ENCODE measurements at regions of chr13 and their contacts with region 1.

Region 1: DNA sequence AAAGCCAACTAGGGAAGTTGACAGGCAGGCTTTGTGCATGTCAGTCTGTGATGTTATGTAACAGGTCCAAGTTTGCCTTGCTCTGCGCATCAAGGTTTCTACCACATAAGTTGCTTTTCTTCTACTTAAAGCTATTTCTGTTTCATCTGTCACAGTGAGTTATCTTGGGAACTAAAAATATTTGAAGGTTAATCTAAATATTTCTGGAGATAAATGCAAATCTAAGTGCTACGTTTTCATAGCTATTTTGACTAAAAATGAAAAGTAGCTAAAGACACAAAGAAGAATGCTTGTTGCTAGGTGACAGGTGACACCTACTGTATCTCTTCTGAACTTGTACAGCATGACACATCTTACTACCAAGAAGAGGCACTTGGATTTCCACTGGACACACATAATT is 135.6 kb downstream of the KLF12 start:
- DNase-seq: peak in 2 of 14 experiments; percentile 30 to 37
- ATAC-seq: peak; percentile 77
- H3K4me3 ChIP-seq: no peak overlapping the region
- H3K4me3 Mint-ChIP-seq: peak overlapping the region; percentile 46
- H3K27ac ChIP-seq: no peak overlapping the region
- H3K27ac Mint-ChIP-seq: peak overlapping the region; percentile 78
- H3K4me1 ChIP-seq: peaks cover 4% of the 10 kb centered on the region
- H3K4me1 Mint-ChIP-seq: peaks cover 88% of the 10 kb centered on the region
- H3K27me3 ChIP-seq: no peaks in the 10 kb centered on the region
- H3K27me3 Mint-ChIP-seq: no peaks in the 10 kb centered on the region
- CTCF ChIP-seq: no peak

Region 2: DNA sequence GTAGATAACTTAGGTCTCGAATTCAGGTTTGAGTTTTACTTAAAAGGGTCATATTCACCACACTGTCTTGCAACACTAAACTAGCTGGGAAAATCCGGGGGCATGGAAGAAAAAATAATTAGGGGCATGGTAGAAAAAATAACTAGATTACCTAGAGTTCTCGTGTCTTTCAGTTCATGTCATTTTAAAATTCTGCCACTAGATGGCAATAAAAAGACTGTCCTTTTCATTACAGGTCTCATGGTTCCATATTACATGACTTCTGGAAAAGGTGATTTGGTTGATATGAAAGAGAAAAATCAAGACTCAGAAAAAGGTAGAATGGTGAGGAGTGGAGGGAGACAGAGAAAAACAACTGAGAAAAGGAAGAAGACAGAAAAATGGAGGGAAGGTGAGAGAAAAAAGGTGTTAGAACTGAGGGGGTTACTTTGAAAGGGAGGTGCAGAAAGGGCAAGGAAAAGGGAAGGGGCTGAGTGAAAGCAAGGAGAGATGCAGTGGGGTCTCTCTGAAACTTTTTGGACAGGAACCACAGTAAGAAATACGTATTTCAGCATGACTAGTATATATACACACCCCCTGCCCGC is 163.4 kb before region 1 on chr13:
- CTCF ChIA-PET with region 1: no interaction called
- POLR2A ChIA-PET with region 1: no interaction called
- intact Hi-C with region 1: loop called in 1 of 2 experiments (anchors 5 kb)
- DNase-seq: peak in 3 of 14 experiments; percentile 65 to 69 (median 68)
- ATAC-seq: peak; percentile 73
- H3K4me3 ChIP-seq: no peak overlapping the region
- H3K4me3 Mint-ChIP-seq: no peak overlapping the region
- H3K27ac ChIP-seq: no peak overlapping the region
- H3K27ac Mint-ChIP-seq: no peak overlapping the region
- H3K4me1 ChIP-seq: peaks cover 7% of the 10 kb centered on the region
- H3K4me1 Mint-ChIP-seq: peaks cover 59% of the 10 kb centered on the region
- H3K27me3 ChIP-seq: no peaks in the 10 kb centered on the region
- H3K27me3 Mint-ChIP-seq: no peaks in the 10 kb centered on the region
- CTCF ChIP-seq: peak; percentile 81

Region 3: GRCh38 chr13:73943137-73943964 is 55.3 kb before region 1 on chr13:
- CTCF ChIA-PET with region 1: no interaction called
- POLR2A ChIA-PET with region 1: interaction called, 3 read pairs
- intact Hi-C with region 1: loop called in 1 of 2 experiments (anchors 5 kb)
- DNase-seq: peak in 3 of 14 experiments; percentile 56 to 83 (median 60)
- ATAC-seq: peak; percentile 92
- H3K4me3 ChIP-seq: no peak overlapping the region
- H3K4me3 Mint-ChIP-seq: peak overlapping the region; percentile 47
- H3K27ac ChIP-seq: peak overlapping the region; percentile 57 to 82
- H3K27ac Mint-ChIP-seq: peak overlapping the region; percentile 87
- H3K4me1 ChIP-seq: peaks cover 34% of the 10 kb centered on the region
- H3K4me1 Mint-ChIP-seq: peaks cover 89% of the 10 kb centered on the region
- H3K27me3 ChIP-seq: no peaks in the 10 kb centered on the region
- H3K27me3 Mint-ChIP-seq: no peaks in the 10 kb centered on the region
- CTCF ChIP-seq: no peak